Common myeloid progenitor, CD34-positive (primary cell): ENCODE measurements at regions of chr1 and their contacts with region 1.

Region 1: GRCh38 chr1:151475175-151475574 is 15.9 kb upstream of the POGZ start:
- DNase-seq: no peak
- H3K4me3 ChIP-seq: no peak overlapping the region
- H3K27ac ChIP-seq: no peak overlapping the region
- H3K4me1 ChIP-seq: peaks cover 0 to 10% (median 4%) of the 10 kb centered on the region in 4 experiments
- H3K27me3 ChIP-seq: peaks cover 0 to 3% (median 0%) of the 10 kb centered on the region in 5 experiments

Region 2: GRCh38 chr1:151485685-151486255 is 10.6 kb after region 1 on chr1:
- CTCF ChIA-PET with region 1: interaction called, 11 read pairs
- POLR2A ChIA-PET with region 1: no interaction called
- DNase-seq: no peak
- H3K4me3 ChIP-seq: no peak overlapping the region
- H3K27ac ChIP-seq: no peak overlapping the region
- H3K4me1 ChIP-seq: no peaks in the 10 kb centered on the region
- H3K27me3 ChIP-seq: peaks cover 0 to 2% (median 0%) of the 10 kb centered on the region in 5 experiments

Region 3: GRCh38 chr1:151539990-151540981 is 65.1 kb after region 1 on chr1 and contains the start of gene TUFT1:
- CTCF ChIA-PET with region 1: no interaction called
- POLR2A ChIA-PET with region 1: no interaction called
- DNase-seq: peak; percentile 92 to 97 (median 96)
- H3K4me3 ChIP-seq: peak within 1 kb of the TSS; percentile 73 to 90 (median 78)
- H3K27ac ChIP-seq: peak within 1 kb of the TSS in 1 of 2 experiments; percentile 25
- H3K4me1 ChIP-seq: peaks cover 6 to 22% (median 20%) of the 10 kb centered on the region in 4 experiments
- H3K27me3 ChIP-seq: peaks cover 0 to 10% (median 4%) of the 10 kb centered on the region in 5 experiments